ENCODE measurements at regions of chr1 and their contacts with region 1.

Region 1: GRCh38 chr1:64268653-64269557 is 65.5 kb downstream of the UBE2U start:
- DNase-seq: peak; percentile 49 to 75 (median 56)
- ATAC-seq: peak; percentile 89
- H3K4me3 ChIP-seq: no peak overlapping the region
- H3K27ac ChIP-seq: no peak overlapping the region
- H3K4me1 ChIP-seq: 0 out of 5 replicates have a peak, but pooled peaks cover 0 to 3% of the 10 kb centered on the region in 2 experiments
- H3K27me3 ChIP-seq: no peaks in the 10 kb centered on the region; a peak in 1 of 5 replicates
- CTCF ChIP-seq: peak; percentile 61 to 86 (median 62); a peak in 5 of 6 replicates
- EP300 ChIP-seq: no peak
- POLR2A ChIP-seq: no peak
- RAD21 ChIP-seq: peak; percentile 86 to 87

Region 2: DNA sequence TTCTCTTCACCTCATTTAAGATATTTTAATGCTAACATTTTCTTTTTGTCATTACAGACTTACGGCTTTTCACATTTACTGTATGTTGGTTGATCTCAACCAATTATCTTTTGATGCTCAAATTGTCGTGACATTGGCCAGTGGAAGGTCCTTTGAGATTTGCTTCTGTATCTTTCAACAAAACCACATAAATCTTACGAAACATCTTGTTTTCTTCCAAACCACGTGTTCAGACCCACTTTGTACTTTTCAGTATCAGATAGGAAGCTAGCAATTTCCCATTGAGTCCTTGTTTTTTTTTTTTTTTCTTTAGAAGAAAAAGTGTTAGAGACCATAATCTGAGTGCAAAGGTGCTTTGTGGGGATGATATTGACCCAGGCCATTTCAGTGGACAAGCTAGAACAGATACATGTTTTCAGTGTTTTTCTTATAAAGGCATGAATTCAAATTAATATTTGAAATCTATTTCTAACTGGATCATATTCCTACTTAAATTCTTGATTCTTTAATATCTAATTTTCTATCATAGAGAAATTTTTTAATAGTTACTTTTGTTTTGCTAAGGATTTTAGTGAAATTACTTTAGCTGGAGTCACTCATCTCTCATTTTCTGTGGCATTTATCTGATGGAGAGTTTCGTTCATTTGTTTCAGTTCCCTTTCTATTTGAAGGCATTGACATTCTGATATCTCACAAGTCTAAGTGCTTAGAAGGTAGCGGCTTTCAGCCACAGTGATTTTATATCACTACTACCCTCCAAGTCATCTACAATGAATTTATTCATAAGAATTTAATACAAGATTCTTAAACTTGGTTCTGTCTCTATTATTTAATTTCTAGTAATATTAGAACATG is 1458.3 kb before region 1 on chr1:
- CTCF ChIA-PET with region 1: no interaction called
- POLR2A ChIA-PET with region 1: no interaction called
- in situ Hi-C with region 1: no loop called
- intact Hi-C with region 1: no loop called
- DNase-seq: no peak
- ATAC-seq: no peak
- H3K4me3 ChIP-seq: no peak overlapping the region
- H3K27ac ChIP-seq: no peak overlapping the region
- H3K4me1 ChIP-seq: no peaks in the 10 kb centered on the region
- H3K27me3 ChIP-seq: no peaks in the 10 kb centered on the region
- CTCF ChIP-seq: no peak
- EP300 ChIP-seq: no peak
- POLR2A ChIP-seq: no peak
- RAD21 ChIP-seq: no peak

Region 3: GRCh38 chr1:64223329-64224151 is 45.4 kb before region 1 on chr1:
- CTCF ChIA-PET with region 1: no interaction called
- POLR2A ChIA-PET with region 1: no interaction called
- in situ Hi-C with region 1: no loop called
- intact Hi-C with region 1: no loop called
- DNase-seq: no peak
- ATAC-seq: no peak
- H3K4me3 ChIP-seq: no peak overlapping the region
- H3K27ac ChIP-seq: no peak overlapping the region
- H3K4me1 ChIP-seq: no peaks in the 10 kb centered on the region
- H3K27me3 ChIP-seq: no peaks in the 10 kb centered on the region
- CTCF ChIP-seq: no peak
- EP300 ChIP-seq: no peak
- POLR2A ChIP-seq: no peak
- RAD21 ChIP-seq: no peak

Region 4: GRCh38 chr1:64487061-64487460 is 218.2 kb after region 1 on chr1:
- CTCF ChIA-PET with region 1: no interaction called
- POLR2A ChIA-PET with region 1: no interaction called
- in situ Hi-C with region 1: no loop called
- intact Hi-C with region 1: loop called (anchors 1 kb)
- DNase-seq: no peak
- ATAC-seq: no peak
- H3K4me3 ChIP-seq: no peak overlapping the region
- H3K27ac ChIP-seq: no peak overlapping the region
- H3K4me1 ChIP-seq: no peaks in the 10 kb centered on the region
- H3K27me3 ChIP-seq: no peaks in the 10 kb centered on the region
- CTCF ChIP-seq: peak in 2 of 3 experiments; percentile 8 to 28; a peak in 3 of 6 replicates
- EP300 ChIP-seq: no peak
- POLR2A ChIP-seq: no peak
- RAD21 ChIP-seq: peak; percentile 17 to 24; a peak in 2 of 4 replicates

Region 5: GRCh38 chr1:64663668-64664067 is 394.8 kb after region 1 on chr1:
- CTCF ChIA-PET with region 1: no interaction called
- POLR2A ChIA-PET with region 1: no interaction called
- in situ Hi-C with region 1: no loop called
- intact Hi-C with region 1: loop called (anchors 5 kb)
- DNase-seq: peak; percentile 25 to 57 (median 42)
- ATAC-seq: peak; percentile 98
- H3K4me3 ChIP-seq: no peak overlapping the region
- H3K27ac ChIP-seq: no peak overlapping the region
- H3K4me1 ChIP-seq: no peaks in the 10 kb centered on the region
- H3K27me3 ChIP-seq: peaks cover 3 to 6% of the 10 kb centered on the region in 2 experiments; a peak in 3 of 5 replicates
- CTCF ChIP-seq: peak; percentile 62 to 72 (median 67); a peak in 5 of 6 replicates
- EP300 ChIP-seq: no peak
- POLR2A ChIP-seq: no peak
- RAD21 ChIP-seq: peak; percentile 40 to 68

Region 6: GRCh38 chr1:64675718-64676345 is 406.9 kb after region 1 on chr1:
- CTCF ChIA-PET with region 1: no interaction called
- POLR2A ChIA-PET with region 1: no interaction called
- in situ Hi-C with region 1: loop called (anchors 10 kb)
- intact Hi-C with region 1: loop called (anchors 5 kb)
- DNase-seq: peak; percentile 6 to 38 (median 24)
- ATAC-seq: no peak
- H3K4me3 ChIP-seq: no peak overlapping the region
- H3K27ac ChIP-seq: no peak overlapping the region
- H3K4me1 ChIP-seq: no peaks in the 10 kb centered on the region
- H3K27me3 ChIP-seq: peaks cover 9 to 14% of the 10 kb centered on the region in 2 experiments; a peak in 4 of 5 replicates
- CTCF ChIP-seq: peak; percentile 28 to 53 (median 47); a peak in 5 of 6 replicates
- EP300 ChIP-seq: no peak
- POLR2A ChIP-seq: no peak
- RAD21 ChIP-seq: no peak

Region 7: DNA sequence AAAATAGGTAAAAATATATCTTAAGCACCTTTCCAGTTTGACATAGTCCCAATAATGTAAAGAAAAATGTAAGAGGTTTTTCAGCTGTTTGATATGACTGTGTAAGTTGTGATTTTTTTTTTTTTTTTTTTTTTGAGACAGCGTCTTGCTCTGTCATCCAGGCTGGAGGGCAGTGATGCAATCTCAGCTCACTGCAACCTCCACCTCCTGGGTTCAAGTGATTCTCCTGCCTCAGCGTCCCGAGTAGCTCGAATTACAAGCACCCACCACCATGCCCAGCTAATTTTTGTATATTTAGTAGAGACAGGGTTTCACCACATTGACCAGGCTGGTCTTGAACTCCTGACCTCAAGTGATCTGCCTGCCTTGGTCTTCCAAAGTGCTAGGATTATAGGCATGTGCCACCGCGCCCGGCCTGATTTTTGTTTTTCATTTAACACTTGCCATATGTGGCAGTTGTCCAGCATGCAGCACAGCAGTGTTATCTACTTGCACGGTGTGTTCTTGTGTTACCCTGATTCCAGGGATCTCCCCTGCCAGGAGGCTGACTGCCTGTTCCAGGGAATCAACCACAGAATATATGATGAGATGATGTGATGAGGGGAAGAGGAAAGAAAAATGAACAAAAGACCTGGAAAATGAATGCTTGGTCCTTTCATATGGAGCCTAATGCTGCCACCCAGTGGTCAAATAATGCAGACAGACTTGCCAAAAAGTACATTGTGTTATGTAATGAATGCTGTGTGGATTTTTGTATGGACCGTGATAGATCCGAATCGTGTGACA is 555.0 kb after region 1 on chr1:
- CTCF ChIA-PET with region 1: interaction called, 8 read pairs
- POLR2A ChIA-PET with region 1: no interaction called
- in situ Hi-C with region 1: loop called (anchors 5 kb)
- intact Hi-C with region 1: loop called (anchors 1 kb)
- DNase-seq: peak; percentile 47 to 83 (median 52)
- ATAC-seq: peak; percentile 91
- H3K4me3 ChIP-seq: no peak overlapping the region
- H3K27ac ChIP-seq: no peak overlapping the region
- H3K4me1 ChIP-seq: no peaks in the 10 kb centered on the region
- H3K27me3 ChIP-seq: no peaks in the 10 kb centered on the region
- CTCF ChIP-seq: peak; percentile 72 to 95 (median 82)
- EP300 ChIP-seq: no peak
- POLR2A ChIP-seq: no peak
- RAD21 ChIP-seq: peak; percentile 93 to 97

Region 8: DNA sequence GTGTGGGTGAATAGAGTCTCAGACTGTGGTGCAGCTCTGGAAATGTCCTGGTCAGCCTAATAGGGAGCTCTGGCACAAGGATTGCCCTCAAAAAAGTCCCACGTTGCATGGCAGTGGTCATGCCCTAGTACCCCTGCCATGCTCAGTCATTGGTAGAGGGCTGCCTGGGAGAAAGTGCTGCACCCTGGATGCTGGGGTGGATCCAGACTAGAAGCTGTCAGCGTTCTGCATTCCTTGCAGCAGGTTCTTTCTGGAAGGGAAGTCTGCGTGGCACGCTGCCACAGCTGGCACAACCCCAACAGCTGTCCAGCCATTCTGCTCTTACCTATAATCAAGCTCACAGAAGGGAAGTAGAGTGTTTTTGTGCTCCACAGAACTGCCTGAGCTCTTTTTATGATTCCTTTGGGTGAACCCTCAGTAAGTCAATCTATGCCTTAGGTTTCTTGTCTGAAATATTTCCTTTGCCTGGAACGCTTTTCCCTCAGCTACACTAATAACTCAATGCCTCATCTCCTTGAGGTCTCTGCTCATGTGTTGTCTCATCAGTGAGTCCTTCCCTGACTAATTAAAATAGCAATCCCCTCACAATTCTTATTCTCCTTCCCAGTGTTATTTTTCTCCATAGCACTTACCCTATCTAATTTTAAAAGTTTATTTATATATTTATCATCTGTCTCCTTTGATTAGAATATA is 758.9 kb after region 1 on chr1:
- CTCF ChIA-PET with region 1: no interaction called
- POLR2A ChIA-PET with region 1: no interaction called
- in situ Hi-C with region 1: loop called (anchors 25 kb)
- intact Hi-C with region 1: no loop called
- DNase-seq: no peak
- ATAC-seq: no peak
- H3K4me3 ChIP-seq: no peak overlapping the region
- H3K27ac ChIP-seq: no peak overlapping the region
- H3K4me1 ChIP-seq: no peaks in the 10 kb centered on the region
- H3K27me3 ChIP-seq: no peaks in the 10 kb centered on the region
- CTCF ChIP-seq: no peak
- EP300 ChIP-seq: no peak
- POLR2A ChIP-seq: no peak
- RAD21 ChIP-seq: no peak